ENCODE measurements at regions of chr1 and their contacts with region 1.

Region 1: GRCh38 chr1:16927711-16928485 is 6.2 kb downstream of the CROCC start:
- DNase-seq: no peak
- H3K4me3 Mint-ChIP-seq: no peak overlapping the region
- H3K27ac Mint-ChIP-seq: no peak overlapping the region
- H3K4me1 Mint-ChIP-seq: peaks cover 6% of the 10 kb centered on the region
- H3K27me3 Mint-ChIP-seq: peaks cover 4% of the 10 kb centered on the region

Region 2: GRCh38 chr1:16971341-16972188 is 43.7 kb after region 1 on chr1:
- intact Hi-C with region 1: loop called (anchors 1 kb)
- DNase-seq: no peak
- H3K4me3 Mint-ChIP-seq: no peak overlapping the region
- H3K27ac Mint-ChIP-seq: no peak overlapping the region
- H3K4me1 Mint-ChIP-seq: no peaks in the 10 kb centered on the region
- H3K27me3 Mint-ChIP-seq: no peaks in the 10 kb centered on the region